CD4-positive, alpha-beta T cell (primary cell): ENCODE measurements at regions of chr7 and their contacts with region 1.

Region 1: GRCh38 chr7:2863461-2864066 is 19.5 kb upstream of the GNA12 start:
- DNase-seq: peak in 13 of 14 experiments; percentile 27 to 87 (median 59)
- ATAC-seq: peak; percentile 87
- H3K4me3 ChIP-seq: peak overlapping the region; percentile 40
- H3K4me3 Mint-ChIP-seq: peak overlapping the region; percentile 46
- H3K27ac ChIP-seq: peak overlapping the region; percentile 22 to 73
- H3K27ac Mint-ChIP-seq: peak overlapping the region; percentile 83
- H3K4me1 ChIP-seq: peaks cover 31% of the 10 kb centered on the region
- H3K4me1 Mint-ChIP-seq: peaks cover 18% of the 10 kb centered on the region
- H3K27me3 ChIP-seq: no peaks in the 10 kb centered on the region
- H3K27me3 Mint-ChIP-seq: no peaks in the 10 kb centered on the region
- CTCF ChIP-seq: no peak

Region 2: DNA sequence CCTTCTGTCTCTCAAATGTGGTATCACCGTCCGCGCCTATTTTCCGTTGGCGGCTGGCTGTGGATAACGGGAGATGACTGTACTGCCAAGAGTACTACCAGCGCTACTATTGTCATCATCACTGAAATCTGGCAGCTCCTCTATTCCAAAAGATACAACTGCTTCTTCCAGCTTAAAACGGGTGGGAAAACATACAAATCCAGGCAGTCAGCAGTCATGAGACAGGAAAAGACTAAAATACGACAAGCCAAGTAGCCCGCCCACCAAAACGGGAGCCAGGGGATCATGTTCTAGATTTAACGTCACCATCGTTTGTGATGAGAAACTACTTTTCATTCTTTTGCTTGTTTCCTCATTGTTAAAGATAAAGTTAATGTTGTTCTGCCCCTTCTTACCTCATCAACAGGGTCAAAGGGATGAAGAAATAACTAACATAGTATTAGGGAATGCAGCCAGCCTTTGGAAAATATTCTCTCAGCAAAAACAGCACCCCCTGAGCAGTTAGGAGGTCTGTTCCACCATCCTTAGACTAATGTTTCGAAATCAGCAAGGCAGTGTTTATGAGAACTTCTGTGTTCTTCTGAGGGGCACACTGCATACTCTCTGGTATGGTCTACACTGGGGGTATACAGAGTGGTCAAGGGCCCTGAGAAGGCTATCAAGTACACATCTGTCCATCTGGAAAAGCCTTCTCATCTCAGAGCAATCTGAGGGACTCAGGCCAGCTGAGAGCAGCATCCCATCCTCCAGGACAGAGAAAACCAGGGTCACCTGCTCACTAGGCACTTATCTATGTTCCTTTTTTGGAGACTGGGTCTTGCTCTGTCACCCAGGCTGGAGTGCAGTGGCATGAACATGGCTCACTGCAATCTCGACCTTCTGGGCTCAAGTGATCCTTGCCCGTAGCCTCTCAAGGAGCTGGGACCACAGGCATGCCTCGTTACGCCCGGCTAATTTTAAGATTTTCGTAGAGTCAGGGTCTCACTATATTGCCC is 66.9 kb before region 1 on chr7:
- CTCF ChIA-PET with region 1: no interaction called
- POLR2A ChIA-PET with region 1: no interaction called
- intact Hi-C with region 1: no loop called
- DNase-seq: no peak
- ATAC-seq: no peak
- H3K4me3 ChIP-seq: no peak overlapping the region
- H3K4me3 Mint-ChIP-seq: no peak overlapping the region
- H3K27ac ChIP-seq: no peak overlapping the region
- H3K27ac Mint-ChIP-seq: no peak overlapping the region
- H3K4me1 ChIP-seq: peaks cover 5% of the 10 kb centered on the region
- H3K4me1 Mint-ChIP-seq: peaks cover 40% of the 10 kb centered on the region
- H3K27me3 ChIP-seq: no peaks in the 10 kb centered on the region
- H3K27me3 Mint-ChIP-seq: no peaks in the 10 kb centered on the region
- CTCF ChIP-seq: no peak

Region 3: GRCh38 chr7:3154912-3155494 is 291.4 kb after region 1 on chr7:
- CTCF ChIA-PET with region 1: no interaction called
- POLR2A ChIA-PET with region 1: no interaction called
- intact Hi-C with region 1: loop called (anchors 1 kb)
- DNase-seq: peak; percentile 30 to 81 (median 51)
- ATAC-seq: peak; percentile 87
- H3K4me3 ChIP-seq: no peak overlapping the region
- H3K4me3 Mint-ChIP-seq: no peak overlapping the region
- H3K27ac ChIP-seq: no peak overlapping the region
- H3K27ac Mint-ChIP-seq: no peak overlapping the region
- H3K4me1 ChIP-seq: no peaks in the 10 kb centered on the region
- H3K4me1 Mint-ChIP-seq: peaks cover 12% of the 10 kb centered on the region
- H3K27me3 ChIP-seq: no peaks in the 10 kb centered on the region
- H3K27me3 Mint-ChIP-seq: no peaks in the 10 kb centered on the region
- CTCF ChIP-seq: peak; percentile 81

Region 4: GRCh38 chr7:3461923-3462322 is 598.4 kb after region 1 on chr7:
- CTCF ChIA-PET with region 1: no interaction called
- POLR2A ChIA-PET with region 1: no interaction called
- intact Hi-C with region 1: loop called in 1 of 2 experiments (anchors 10 kb)
- DNase-seq: peak; percentile 45 to 88 (median 64)
- ATAC-seq: peak; percentile 90
- H3K4me3 ChIP-seq: no peak overlapping the region
- H3K4me3 Mint-ChIP-seq: peak overlapping the region; percentile 56
- H3K27ac ChIP-seq: peak overlapping the region; percentile 18 to 46
- H3K27ac Mint-ChIP-seq: peak overlapping the region; percentile 87
- H3K4me1 ChIP-seq: peaks cover 15% of the 10 kb centered on the region
- H3K4me1 Mint-ChIP-seq: peaks cover 59% of the 10 kb centered on the region
- H3K27me3 ChIP-seq: no peaks in the 10 kb centered on the region
- H3K27me3 Mint-ChIP-seq: no peaks in the 10 kb centered on the region
- CTCF ChIP-seq: peak; percentile 14

Region 5: GRCh38 chr7:3897438-3898385 is 1034.1 kb after region 1 on chr7:
- CTCF ChIA-PET with region 1: no interaction called
- POLR2A ChIA-PET with region 1: no interaction called
- intact Hi-C with region 1: loop called in 1 of 2 experiments (anchors 1 kb)
- DNase-seq: peak; percentile 13 to 75 (median 32)
- ATAC-seq: peak; percentile 52
- H3K4me3 ChIP-seq: no peak overlapping the region
- H3K4me3 Mint-ChIP-seq: no peak overlapping the region
- H3K27ac ChIP-seq: no peak overlapping the region
- H3K27ac Mint-ChIP-seq: no peak overlapping the region
- H3K4me1 ChIP-seq: no peaks in the 10 kb centered on the region
- H3K4me1 Mint-ChIP-seq: no peaks in the 10 kb centered on the region
- H3K27me3 ChIP-seq: no peaks in the 10 kb centered on the region
- H3K27me3 Mint-ChIP-seq: no peaks in the 10 kb centered on the region
- CTCF ChIP-seq: peak; percentile 79